B cell (primary cell): ENCODE measurements at regions of chr16 and their contacts with region 1.

Region 1: GRCh38 chr16:75238132-75238852 is 13.1 kb downstream of the BCAR1 start:
- DNase-seq: no peak
- ATAC-seq: no peak
- H3K4me3 ChIP-seq: no peak overlapping the region
- H3K4me3 Mint-ChIP-seq: no peak overlapping the region
- H3K27ac ChIP-seq: no peak overlapping the region
- H3K27ac Mint-ChIP-seq: no peak overlapping the region
- H3K4me1 ChIP-seq: peaks cover 0 to 7% of the 10 kb centered on the region in 2 donors
- H3K4me1 Mint-ChIP-seq: peaks cover 2% of the 10 kb centered on the region
- H3K27me3 ChIP-seq: peaks cover 0 to 89% (median 16%) of the 10 kb centered on the region in 4 experiments
- H3K27me3 Mint-ChIP-seq: peaks cover 59% of the 10 kb centered on the region
- CTCF ChIP-seq: no peak

Region 2: GRCh38 chr16:75379911-75380847 is 141.9 kb after region 1 on chr16:
- CTCF ChIA-PET with region 1: interaction called, 109 read pairs
- POLR2A ChIA-PET with region 1: interaction called, 3 read pairs
- intact Hi-C with region 1: loop called (anchors 1 kb)
- DNase-seq: peak; percentile 87
- ATAC-seq: peak; percentile 98
- H3K4me3 ChIP-seq: no peak overlapping the region
- H3K4me3 Mint-ChIP-seq: peak overlapping the region; percentile 44
- H3K27ac ChIP-seq: no peak overlapping the region
- H3K27ac Mint-ChIP-seq: peak overlapping the region; percentile 57
- H3K4me1 ChIP-seq: peaks cover 23 to 41% of the 10 kb centered on the region in 2 donors
- H3K4me1 Mint-ChIP-seq: peaks cover 27% of the 10 kb centered on the region
- H3K27me3 ChIP-seq: peaks cover 10 to 79% (median 71%) of the 10 kb centered on the region in 4 experiments
- H3K27me3 Mint-ChIP-seq: peaks cover 77% of the 10 kb centered on the region
- CTCF ChIP-seq: no peak

Region 3: DNA sequence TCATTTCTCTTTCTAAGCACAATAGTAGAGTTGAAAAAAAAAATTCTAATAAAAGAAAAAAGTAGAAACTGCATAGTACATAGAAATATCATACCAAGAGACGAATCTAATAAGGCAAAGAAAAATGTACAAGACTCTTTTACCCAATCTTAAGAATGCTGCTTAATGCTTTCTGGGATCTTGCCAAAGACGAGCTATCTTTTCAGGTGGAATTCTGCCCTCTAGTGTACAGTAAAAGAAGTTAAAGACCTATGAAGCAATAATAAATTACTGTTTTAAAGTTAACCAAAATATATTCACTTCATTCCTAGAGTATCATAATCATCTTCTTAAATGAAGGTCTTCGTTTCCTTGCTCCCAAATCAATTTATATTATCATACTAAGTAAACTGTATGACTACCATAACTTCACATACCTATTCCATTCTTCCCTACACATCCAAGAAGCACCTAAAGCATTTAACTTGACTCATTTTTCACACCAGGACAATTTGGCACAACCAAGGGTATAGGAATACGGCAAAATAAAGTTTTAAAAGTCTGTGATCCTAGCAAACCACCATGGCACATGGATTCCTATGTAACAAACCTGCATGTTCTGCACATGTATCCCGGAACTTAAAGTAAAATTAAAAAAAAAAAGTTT is 147.3 kb after region 1 on chr16:
- CTCF ChIA-PET with region 1: interaction called, 109 read pairs
- POLR2A ChIA-PET with region 1: interaction called, 3 read pairs
- intact Hi-C with region 1: loop called (anchors 1 kb)
- DNase-seq: peak; percentile 74
- ATAC-seq: peak; percentile 39
- H3K4me3 ChIP-seq: no peak overlapping the region
- H3K4me3 Mint-ChIP-seq: no peak overlapping the region
- H3K27ac ChIP-seq: no peak overlapping the region
- H3K27ac Mint-ChIP-seq: no peak overlapping the region
- H3K4me1 ChIP-seq: peaks cover 10 to 17% of the 10 kb centered on the region in 2 donors
- H3K4me1 Mint-ChIP-seq: peaks cover 8% of the 10 kb centered on the region
- H3K27me3 ChIP-seq: peaks cover 4 to 40% (median 35%) of the 10 kb centered on the region in 4 experiments
- H3K27me3 Mint-ChIP-seq: peaks cover 37% of the 10 kb centered on the region
- CTCF ChIP-seq: peak; percentile 83

Region 4: DNA sequence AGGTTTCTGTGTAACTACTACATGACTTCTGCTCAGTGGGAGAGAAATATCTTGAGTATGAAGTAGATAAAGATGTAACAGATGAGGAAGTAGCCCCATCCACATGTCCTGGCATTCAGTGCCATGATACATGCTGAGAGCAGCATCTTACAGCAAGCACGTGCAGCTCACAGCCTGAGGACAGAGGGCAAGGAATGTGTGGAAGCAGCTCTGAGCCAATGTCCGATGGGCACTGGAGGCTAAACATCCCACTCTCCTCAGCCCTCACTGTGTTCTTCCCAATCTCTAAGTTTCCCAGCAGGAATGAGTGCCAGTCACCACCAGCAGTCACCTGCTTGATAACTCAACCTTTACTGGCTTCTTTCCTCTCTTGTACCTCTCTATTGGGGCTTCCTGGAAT is 154.6 kb after region 1 on chr16:
- CTCF ChIA-PET with region 1: interaction called, 109 read pairs
- POLR2A ChIA-PET with region 1: no interaction called
- intact Hi-C with region 1: no loop called
- DNase-seq: no peak
- ATAC-seq: no peak
- H3K4me3 ChIP-seq: no peak overlapping the region
- H3K4me3 Mint-ChIP-seq: no peak overlapping the region
- H3K27ac ChIP-seq: no peak overlapping the region
- H3K27ac Mint-ChIP-seq: no peak overlapping the region
- H3K4me1 ChIP-seq: no peaks in the 10 kb centered on the region
- H3K4me1 Mint-ChIP-seq: no peaks in the 10 kb centered on the region
- H3K27me3 ChIP-seq: peaks cover 0 to 13% (median 5%) of the 10 kb centered on the region in 4 experiments
- H3K27me3 Mint-ChIP-seq: peaks cover 7% of the 10 kb centered on the region
- CTCF ChIP-seq: no peak

Region 5: GRCh38 chr16:75402821-75403475 is 164.7 kb after region 1 on chr16:
- CTCF ChIA-PET with region 1: interaction called, 50 read pairs
- POLR2A ChIA-PET with region 1: no interaction called
- intact Hi-C with region 1: loop called (anchors 1 kb)
- DNase-seq: peak; percentile 50
- ATAC-seq: no peak
- H3K4me3 ChIP-seq: no peak overlapping the region
- H3K4me3 Mint-ChIP-seq: no peak overlapping the region
- H3K27ac ChIP-seq: no peak overlapping the region
- H3K27ac Mint-ChIP-seq: no peak overlapping the region
- H3K4me1 ChIP-seq: no peaks in the 10 kb centered on the region
- H3K4me1 Mint-ChIP-seq: no peaks in the 10 kb centered on the region
- H3K27me3 ChIP-seq: no peaks in the 10 kb centered on the region
- H3K27me3 Mint-ChIP-seq: no peaks in the 10 kb centered on the region
- CTCF ChIP-seq: peak; percentile 81